ENCODE measurements at regions of chr10 and their contacts with region 1.

Region 1: GRCh38 chr10:123967396-123968243 is 76.0 kb upstream of the CPXM2 start:
- DNase-seq: peak; percentile 87
- CTCF ChIP-seq: peak; percentile 84

Region 2: GRCh38 chr10:123573236-123574108 is 394.1 kb before region 1 on chr10:
- CTCF ChIA-PET with region 1: interaction called, 40 read pairs
- POLR2A ChIA-PET with region 1: no interaction called
- DNase-seq: peak; percentile 66
- CTCF ChIP-seq: peak; percentile 69

Region 3: GRCh38 chr10:123582084-123582989 is 385.3 kb before region 1 on chr10:
- CTCF ChIA-PET with region 1: interaction called, 101 read pairs
- POLR2A ChIA-PET with region 1: no interaction called
- DNase-seq: peak; percentile 81
- CTCF ChIP-seq: peak; percentile 93